Activated naive CD4-positive, alpha-beta T cell treated with anti-CD3 and anti-CD28 coated beads, Interleukin-2, amount 10 ng/mL, durations not matched to agents 7 days and 5 days (primary cell): ENCODE measurements at regions of chr20 and their contacts with region 1.

Region 1: DNA sequence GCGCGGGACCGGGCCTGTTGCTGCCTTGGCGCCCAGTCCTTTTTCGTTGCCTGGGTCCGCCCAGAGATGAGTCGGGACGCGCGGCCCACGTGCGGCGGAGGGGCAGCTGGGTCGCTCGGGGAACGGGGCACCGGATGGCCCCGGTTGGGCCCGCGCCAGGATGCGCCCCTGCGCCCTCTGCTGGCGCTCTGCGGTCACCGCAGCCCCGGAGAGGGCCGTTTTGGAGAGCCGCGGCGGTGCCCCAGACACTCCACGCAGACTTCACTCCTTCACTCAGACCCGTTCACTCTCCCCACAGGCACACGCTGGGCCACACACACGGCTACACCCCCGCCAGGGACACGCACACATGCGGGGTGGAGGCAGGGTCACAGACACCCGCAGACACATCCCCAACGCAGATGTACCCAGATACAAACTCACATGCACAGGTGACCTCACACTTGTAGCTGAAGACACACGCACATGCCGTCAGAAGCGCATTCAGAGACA is 38.8 kb downstream of the SRC start:
- DNase-seq: peak; percentile 82
- H3K4me3 Mint-ChIP-seq: peak overlapping the region; percentile 75
- H3K27ac Mint-ChIP-seq: no peak overlapping the region
- H3K4me1 Mint-ChIP-seq: peaks cover 4% of the 10 kb centered on the region
- H3K27me3 Mint-ChIP-seq: peaks cover 36% of the 10 kb centered on the region

Region 2: GRCh38 chr20:37251825-37252477 is 132.8 kb before region 1 on chr20:
- CTCF ChIA-PET with region 1: no interaction called
- DNase-seq: no peak
- H3K4me3 Mint-ChIP-seq: no peak overlapping the region
- H3K27ac Mint-ChIP-seq: no peak overlapping the region
- H3K4me1 Mint-ChIP-seq: no peaks in the 10 kb centered on the region
- H3K27me3 Mint-ChIP-seq: peaks cover 16% of the 10 kb centered on the region

Region 3: GRCh38 chr20:37270576-37271420 is 113.9 kb before region 1 on chr20:
- CTCF ChIA-PET with region 1: interaction called, 20 read pairs
- DNase-seq: no peak
- H3K4me3 Mint-ChIP-seq: no peak overlapping the region
- H3K27ac Mint-ChIP-seq: no peak overlapping the region
- H3K4me1 Mint-ChIP-seq: no peaks in the 10 kb centered on the region
- H3K27me3 Mint-ChIP-seq: peaks cover 25% of the 10 kb centered on the region

Region 4: DNA sequence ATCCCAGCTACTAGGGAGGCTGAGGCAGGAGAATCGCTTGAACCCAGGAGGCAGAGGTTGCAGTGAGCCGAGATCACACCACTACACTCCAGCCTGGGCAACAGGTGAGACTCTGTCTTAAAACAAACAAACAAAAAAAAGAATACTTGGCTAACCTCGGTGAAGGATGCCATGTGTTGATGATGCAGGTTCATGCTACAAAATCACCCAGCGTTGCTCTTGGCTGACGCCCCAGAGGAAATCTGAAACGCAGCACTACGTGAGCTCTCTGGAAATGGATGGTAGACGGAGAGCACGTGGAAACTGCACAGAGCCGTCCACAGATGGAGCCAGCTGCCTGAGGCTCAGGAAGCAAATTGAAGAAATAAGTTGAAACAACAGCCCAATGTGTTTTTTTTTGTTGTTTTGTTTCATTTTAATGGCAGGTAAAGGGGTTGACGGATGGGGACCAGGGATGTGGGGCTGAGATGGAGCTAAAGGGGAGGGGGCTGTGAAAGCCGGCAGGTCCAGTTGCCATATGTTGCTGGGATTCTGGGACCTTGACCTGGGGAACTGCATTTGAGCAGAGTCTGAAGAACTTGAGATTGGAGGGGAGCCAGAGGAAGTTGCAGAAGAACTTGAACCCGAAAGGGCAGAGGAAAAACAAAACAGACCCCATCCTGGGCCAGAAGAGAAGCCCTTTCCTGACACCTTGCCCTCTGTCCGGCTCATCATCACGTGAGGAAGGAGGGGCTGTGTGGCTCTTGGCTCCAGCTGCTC is 108.1 kb before region 1 on chr20:
- CTCF ChIA-PET with region 1: interaction called, 17 read pairs
- DNase-seq: peak; percentile 38
- H3K4me3 Mint-ChIP-seq: no peak overlapping the region
- H3K27ac Mint-ChIP-seq: no peak overlapping the region
- H3K4me1 Mint-ChIP-seq: peaks cover 8% of the 10 kb centered on the region
- H3K27me3 Mint-ChIP-seq: peaks cover 43% of the 10 kb centered on the region

Region 5: GRCh38 chr20:37627060-37627769 is 242.5 kb after region 1 on chr20:
- CTCF ChIA-PET with region 1: no interaction called
- DNase-seq: peak; percentile 66
- H3K4me3 Mint-ChIP-seq: no peak overlapping the region
- H3K27ac Mint-ChIP-seq: no peak overlapping the region
- H3K4me1 Mint-ChIP-seq: no peaks in the 10 kb centered on the region
- H3K27me3 Mint-ChIP-seq: peaks cover 33% of the 10 kb centered on the region